ENCODE measurements at regions of chr5 and their contacts with region 1.

Region 1: DNA sequence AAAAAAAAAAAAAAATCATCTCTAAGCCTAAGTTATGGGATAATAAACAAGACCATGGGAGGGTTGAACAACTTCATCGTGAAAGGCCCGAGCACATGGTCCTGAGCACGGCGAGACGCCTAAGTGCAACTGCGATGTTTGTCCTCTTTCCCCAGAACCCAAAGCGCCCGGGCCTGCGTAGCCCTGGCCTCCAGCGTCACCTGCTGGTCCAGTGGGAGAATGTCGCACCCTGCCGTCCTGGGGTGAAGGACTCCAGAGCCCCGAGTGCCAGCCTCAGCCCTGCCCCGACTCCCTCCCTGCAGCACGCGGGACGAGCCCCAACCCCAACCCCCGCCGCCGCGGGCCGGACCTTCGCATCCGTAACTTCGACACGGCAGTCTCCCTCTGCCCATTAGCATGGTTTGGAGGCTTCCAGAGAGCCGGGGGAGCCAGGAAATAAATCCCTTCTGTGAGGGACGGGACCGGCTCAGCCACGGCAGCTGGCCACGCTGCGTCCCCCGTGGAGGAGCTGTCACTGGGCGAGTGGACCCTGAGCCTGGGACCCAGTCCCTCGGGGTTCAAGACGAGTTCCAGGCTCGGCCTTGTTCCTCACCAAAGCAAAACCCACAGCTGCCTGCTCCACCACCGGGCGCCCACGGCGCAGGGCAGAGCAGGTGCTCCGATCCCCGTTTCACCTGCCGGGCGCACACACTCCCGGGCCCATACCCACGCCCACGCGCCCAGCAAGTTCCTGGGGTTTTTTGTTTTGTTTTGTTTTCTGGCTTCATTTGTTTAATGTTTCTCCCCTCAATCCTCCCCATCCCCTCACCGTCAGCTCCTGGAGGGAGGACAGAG is 132.5 kb upstream of the HAND1 start:
- DNase-seq: peak; percentile 76
- ATAC-seq: peak; percentile 99
- H3K4me3 ChIP-seq: peak overlapping the region; percentile 37 to 55
- H3K27ac ChIP-seq: no peak overlapping the region
- H3K4me1 ChIP-seq: peaks cover 3 to 18% of the 10 kb centered on the region in 2 experiments; a peak in 3 of 4 replicates
- H3K27me3 ChIP-seq: no peaks in the 10 kb centered on the region
- CTCF ChIP-seq: peak; percentile 93 to 95 (median 94)
- POLR2A ChIP-seq: no peak
- RAD21 ChIP-seq: peak; percentile 99

Region 2: GRCh38 chr5:154421868-154422267 is 188.7 kb before region 1 on chr5:
- CTCF ChIA-PET with region 1: no interaction called
- POLR2A ChIA-PET with region 1: no interaction called
- RAD21 ChIA-PET with region 1: no interaction called
- intact Hi-C with region 1: loop called (anchors 1 kb)
- DNase-seq: peak; percentile 18
- ATAC-seq: peak; percentile 83
- H3K4me3 ChIP-seq: no peak overlapping the region
- H3K27ac ChIP-seq: no peak overlapping the region
- H3K4me1 ChIP-seq: no peaks in the 10 kb centered on the region
- H3K27me3 ChIP-seq: no peaks in the 10 kb centered on the region
- CTCF ChIP-seq: peak; percentile 42 to 67 (median 65); a peak in 5 of 6 replicates
- POLR2A ChIP-seq: no peak
- RAD21 ChIP-seq: peak; percentile 68

Region 3: DNA sequence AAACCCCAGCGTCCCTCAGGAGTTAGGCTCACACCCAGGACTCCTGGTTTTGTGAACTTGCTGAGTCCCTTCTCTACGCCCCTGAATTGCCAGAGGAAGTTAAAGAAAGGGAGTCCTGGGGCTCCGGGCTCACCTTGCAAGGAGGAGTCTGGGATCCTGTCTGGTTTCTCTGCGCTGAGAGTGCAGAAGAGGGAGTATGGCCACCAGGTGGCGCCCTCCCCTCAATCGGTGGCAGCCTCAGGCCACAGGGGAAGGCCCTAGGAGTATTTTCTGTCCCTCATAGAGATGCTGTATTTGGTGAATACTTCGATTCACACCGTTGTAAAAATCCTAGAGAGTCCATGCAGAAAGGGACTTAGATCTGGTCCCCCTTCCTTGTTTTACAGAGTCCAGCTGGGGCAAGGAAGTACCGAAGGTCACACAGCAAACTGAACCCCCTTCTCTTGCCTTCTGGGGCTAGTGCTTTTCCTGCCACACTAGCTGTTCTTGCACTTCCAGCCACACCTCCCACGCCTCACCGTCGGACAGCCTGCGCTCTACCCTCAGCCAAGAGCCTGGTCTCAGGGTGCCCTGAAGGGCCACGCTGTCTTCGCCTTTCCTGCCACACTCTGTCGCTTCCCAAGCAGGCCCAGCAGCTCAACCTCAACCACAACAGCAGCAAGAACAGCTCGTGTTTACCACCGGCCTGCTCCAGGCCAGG is 142.7 kb before region 1 on chr5:
- CTCF ChIA-PET with region 1: interaction called, 9 read pairs
- POLR2A ChIA-PET with region 1: no interaction called
- RAD21 ChIA-PET with region 1: interaction called in 1 of 2 experiments, 3 read pairs
- intact Hi-C with region 1: loop called (anchors 1 kb)
- DNase-seq: peak; percentile 47
- ATAC-seq: peak; percentile 99
- H3K4me3 ChIP-seq: no peak overlapping the region
- H3K27ac ChIP-seq: no peak overlapping the region; the same call in 1 of the 2 replicates
- H3K4me1 ChIP-seq: peaks cover 4 to 5% of the 10 kb centered on the region in 2 experiments; a peak in 3 of 4 replicates
- H3K27me3 ChIP-seq: no peaks in the 10 kb centered on the region
- CTCF ChIP-seq: peak; percentile 85 to 93 (median 90)
- POLR2A ChIP-seq: no peak
- RAD21 ChIP-seq: peak; percentile 88

Region 4: DNA sequence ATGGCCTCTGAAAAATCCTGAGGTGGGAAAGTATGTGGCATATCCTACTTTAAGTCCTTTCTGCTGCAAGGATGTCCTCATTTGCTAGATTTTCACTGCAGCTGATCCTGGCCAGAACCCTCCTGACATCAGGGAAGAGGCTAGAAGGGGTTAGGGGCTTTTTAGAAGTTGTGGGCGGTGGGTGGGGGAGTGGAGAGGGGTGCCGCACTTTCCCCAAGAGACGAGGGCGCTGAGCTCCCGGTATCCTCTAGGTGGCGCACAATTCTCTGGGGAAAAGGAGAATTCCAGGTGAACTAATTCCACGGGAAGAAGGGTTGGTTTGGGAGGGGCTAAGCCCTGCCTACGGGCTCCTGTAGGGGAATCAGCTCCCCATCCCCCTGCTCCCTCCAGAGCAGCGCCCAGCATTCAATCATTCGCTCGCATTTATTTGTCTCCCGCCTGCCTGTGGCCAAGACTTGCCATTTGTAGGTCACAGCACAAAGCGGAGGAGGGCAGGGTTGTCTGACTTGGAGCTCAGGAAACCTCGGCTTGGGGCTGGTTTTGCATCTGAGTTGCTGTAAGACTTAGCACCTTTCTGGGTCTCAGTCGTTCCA is 89.6 kb before region 1 on chr5:
- CTCF ChIA-PET with region 1: no interaction called
- POLR2A ChIA-PET with region 1: no interaction called
- RAD21 ChIA-PET with region 1: interaction called in 1 of 2 experiments, 3 read pairs
- intact Hi-C with region 1: loop called (anchors 2 kb)
- DNase-seq: peak; percentile 63
- ATAC-seq: peak; percentile 91
- H3K4me3 ChIP-seq: peak overlapping the region; percentile 16 to 37; a peak in 3 of 4 replicates
- H3K27ac ChIP-seq: no peak overlapping the region
- H3K4me1 ChIP-seq: peaks cover 5 to 21% of the 10 kb centered on the region in 2 experiments; a peak in 3 of 4 replicates
- H3K27me3 ChIP-seq: no peaks in the 10 kb centered on the region
- CTCF ChIP-seq: peak; percentile 84 to 95 (median 91)
- POLR2A ChIP-seq: no peak
- RAD21 ChIP-seq: peak; percentile 74

Measured in HCT116 (cell line).